Esophagus squamous epithelium (tissue), 5 donors: ENCODE measurements at regions of chr5 and their contacts with region 1.

Region 1: GRCh38 chr5:133868946-133869518 is 99.4 kb downstream of the C5orf15 start:
- DNase-seq: no peak
- H3K4me3 ChIP-seq: peak overlapping the region in 1 of 4 donors; percentile 37
- H3K27ac ChIP-seq: no peak overlapping the region
- H3K4me1 ChIP-seq: peaks cover 0 to 28% (median 2%) of the 10 kb centered on the region in 3 donors
- H3K27me3 ChIP-seq: peaks cover 0 to 3% (median 0%) of the 10 kb centered on the region in 4 donors
- CTCF ChIP-seq: peak; percentile 44 to 87 (median 80)
- POLR2A ChIP-seq: no peak

Region 2: DNA sequence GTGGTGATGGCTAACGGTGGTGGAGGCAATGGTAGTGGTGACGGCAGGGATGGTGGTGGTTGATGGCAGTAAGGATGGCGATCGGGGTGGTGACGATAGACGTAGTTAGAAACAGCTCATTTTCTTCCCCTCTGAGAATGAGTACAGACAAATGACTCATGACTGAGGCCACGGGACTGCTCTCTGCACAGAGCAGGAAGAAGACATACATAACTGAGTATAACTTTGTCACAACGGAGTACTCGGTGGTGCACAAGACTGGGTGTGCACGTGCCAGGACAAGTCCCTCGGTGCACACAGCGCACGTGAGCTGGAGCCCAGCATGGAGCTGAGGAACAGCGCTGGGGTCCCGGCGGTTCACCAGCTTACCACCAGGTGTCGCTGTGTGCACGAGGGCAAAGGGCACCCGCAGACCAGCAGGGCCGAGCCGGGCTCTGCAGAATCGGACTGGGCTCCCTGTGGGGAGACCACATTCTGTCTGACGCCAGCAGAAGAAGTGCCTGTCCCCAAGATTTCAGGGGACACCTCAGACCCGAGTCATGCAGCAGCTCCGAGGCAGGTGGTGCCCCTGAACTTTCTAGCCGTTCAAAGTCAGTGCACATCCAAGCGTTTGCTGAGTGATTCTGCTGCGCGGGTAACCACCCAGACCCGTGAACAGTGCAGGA is 445.3 kb before region 1 on chr5:
- intact Hi-C with region 1: loop called (anchors 10 kb)
- DNase-seq: no peak
- H3K4me3 ChIP-seq: no peak overlapping the region
- H3K27ac ChIP-seq: peak overlapping the region; percentile 24 to 54 (median 44)
- H3K4me1 ChIP-seq: peaks cover 6 to 23% (median 7%) of the 10 kb centered on the region in 3 donors
- H3K27me3 ChIP-seq: peaks cover 0 to 6% (median 0%) of the 10 kb centered on the region in 4 donors
- CTCF ChIP-seq: peak; percentile 78 to 94 (median 90)
- POLR2A ChIP-seq: no peak

Region 3: GRCh38 chr5:134041570-134042411 is 172.8 kb after region 1 on chr5:
- intact Hi-C with region 1: no loop called
- DNase-seq: no peak
- H3K4me3 ChIP-seq: no peak overlapping the region
- H3K27ac ChIP-seq: no peak overlapping the region
- H3K4me1 ChIP-seq: peaks cover 0 to 12% (median 0%) of the 10 kb centered on the region in 3 donors
- H3K27me3 ChIP-seq: no peaks in the 10 kb centered on the region
- CTCF ChIP-seq: no peak
- POLR2A ChIP-seq: no peak